ENCODE measurements at regions of chr4 and their contacts with region 1.

Region 1: GRCh38 chr4:29243851-29244250 is 1476.3 kb upstream of the PCDH7 start:
- DNase-seq: no peak
- ATAC-seq: no peak
- H3K4me3 ChIP-seq: no peak overlapping the region
- H3K27ac ChIP-seq: no peak overlapping the region
- H3K4me1 ChIP-seq: no peaks in the 10 kb centered on the region
- H3K27me3 ChIP-seq: no peaks in the 10 kb centered on the region

Region 2: DNA sequence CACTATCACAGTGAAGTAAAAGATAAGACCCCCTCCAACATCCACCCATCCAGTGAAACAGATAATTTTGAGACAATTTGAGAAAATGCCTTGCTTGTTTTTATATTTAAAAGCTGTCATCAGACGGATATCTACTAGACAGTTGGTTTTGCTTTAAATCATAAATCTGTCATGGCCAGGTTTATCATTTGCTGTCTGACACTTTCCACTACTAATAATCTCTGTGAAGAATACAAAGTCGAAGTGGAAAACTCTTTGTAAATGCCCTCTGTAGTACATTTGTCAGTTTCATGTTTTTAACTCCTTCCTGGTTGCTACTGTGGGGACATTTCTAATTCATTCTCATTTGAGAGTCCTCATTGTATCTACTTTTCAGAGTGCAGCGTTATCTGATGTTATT is 129.9 kb before region 1 on chr4:
- intact Hi-C with region 1: no loop called
- DNase-seq: no peak
- ATAC-seq: no peak
- H3K4me3 ChIP-seq: no peak overlapping the region
- H3K27ac ChIP-seq: no peak overlapping the region
- H3K4me1 ChIP-seq: no peaks in the 10 kb centered on the region
- H3K27me3 ChIP-seq: no peaks in the 10 kb centered on the region

Region 3: GRCh38 chr4:29459926-29460325 is 216.1 kb after region 1 on chr4:
- intact Hi-C with region 1: loop called in 1 of 4 experiments (anchors 5 kb)
- DNase-seq: no peak
- ATAC-seq: no peak
- H3K4me3 ChIP-seq: no peak overlapping the region
- H3K27ac ChIP-seq: no peak overlapping the region
- H3K4me1 ChIP-seq: no peaks in the 10 kb centered on the region
- H3K27me3 ChIP-seq: no peaks in the 10 kb centered on the region

Measured in right cardiac atrium (tissue), 5 donors.